HEK293 (cell line): ENCODE measurements at regions of chr4 and their contacts with region 1.

Region 1: GRCh38 chr4:108492816-108493595 is 127.4 kb upstream of the RPL34 start:
- H3K4me3 ChIP-seq: no peak overlapping the region
- H3K27ac ChIP-seq: no peak overlapping the region
- H3K4me1 ChIP-seq: no peaks in the 10 kb centered on the region
- CTCF ChIP-seq: no peak

Region 2: DNA sequence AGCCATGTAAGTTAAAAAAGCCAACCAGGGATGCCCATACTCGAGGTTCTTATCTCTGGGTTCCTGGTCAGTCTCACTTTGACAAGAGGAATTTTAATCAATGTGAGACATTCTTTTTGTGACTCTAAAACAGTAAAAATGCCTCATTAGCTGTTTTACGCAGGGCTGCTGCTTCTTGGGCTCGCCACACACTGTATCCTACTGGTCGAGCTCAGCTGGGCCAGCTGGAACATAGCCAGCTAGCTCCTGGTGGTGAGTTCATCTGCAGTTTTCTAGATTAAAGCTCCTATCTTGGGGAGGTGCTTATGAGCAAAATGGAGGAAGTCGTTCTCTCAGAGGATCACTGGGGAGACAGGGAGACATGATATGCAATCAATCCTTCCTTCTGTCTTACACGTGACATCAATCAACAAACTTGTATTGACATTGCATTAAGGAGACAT is 268.4 kb before region 1 on chr4:
- CTCF ChIA-PET with region 1: no interaction called
- POLR2A ChIA-PET with region 1: no interaction called
- H3K4me3 ChIP-seq: no peak overlapping the region
- H3K27ac ChIP-seq: no peak overlapping the region
- H3K4me1 ChIP-seq: no peaks in the 10 kb centered on the region; the same call in 1 of the 2 replicates
- CTCF ChIP-seq: peak; percentile 24; the same call in 1 of the 2 replicates

Region 3: DNA sequence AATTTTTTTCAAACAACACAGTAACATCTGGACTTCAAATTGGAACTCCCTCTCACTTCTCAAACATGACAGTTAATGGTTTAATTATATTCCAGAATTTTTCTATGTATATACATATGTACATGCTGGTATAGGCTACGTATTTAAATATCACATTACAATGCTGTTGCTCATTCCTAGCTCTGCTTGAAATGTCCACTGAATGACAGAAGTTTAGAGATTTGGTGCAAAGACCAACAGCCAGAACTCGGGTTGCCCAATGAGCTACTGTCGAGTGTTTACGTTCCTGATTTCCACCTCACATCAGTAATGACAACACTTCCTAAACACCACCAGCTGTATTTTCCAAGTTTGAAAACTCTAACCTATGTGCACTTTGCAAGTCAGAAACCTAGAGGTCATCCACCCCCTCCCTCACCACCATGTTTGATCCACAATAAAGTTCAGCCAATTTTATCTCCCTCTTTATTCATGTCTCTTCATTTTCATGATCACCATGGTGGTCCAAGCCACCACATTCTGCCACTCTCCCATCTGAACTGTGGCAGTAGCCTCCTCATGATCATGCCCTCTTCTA is 78.1 kb after region 1 on chr4:
- CTCF ChIA-PET with region 1: interaction called, 18 read pairs
- POLR2A ChIA-PET with region 1: no interaction called
- H3K4me3 ChIP-seq: no peak overlapping the region
- H3K27ac ChIP-seq: no peak overlapping the region
- H3K4me1 ChIP-seq: no peaks in the 10 kb centered on the region
- CTCF ChIP-seq: no peak